Activated CD4-positive, alpha-beta memory T cell treated with anti-CD3 and anti-CD28 coated beads for 36 hours (primary cell): ENCODE measurements at regions of chr12 and their contacts with region 1.

Region 1: DNA sequence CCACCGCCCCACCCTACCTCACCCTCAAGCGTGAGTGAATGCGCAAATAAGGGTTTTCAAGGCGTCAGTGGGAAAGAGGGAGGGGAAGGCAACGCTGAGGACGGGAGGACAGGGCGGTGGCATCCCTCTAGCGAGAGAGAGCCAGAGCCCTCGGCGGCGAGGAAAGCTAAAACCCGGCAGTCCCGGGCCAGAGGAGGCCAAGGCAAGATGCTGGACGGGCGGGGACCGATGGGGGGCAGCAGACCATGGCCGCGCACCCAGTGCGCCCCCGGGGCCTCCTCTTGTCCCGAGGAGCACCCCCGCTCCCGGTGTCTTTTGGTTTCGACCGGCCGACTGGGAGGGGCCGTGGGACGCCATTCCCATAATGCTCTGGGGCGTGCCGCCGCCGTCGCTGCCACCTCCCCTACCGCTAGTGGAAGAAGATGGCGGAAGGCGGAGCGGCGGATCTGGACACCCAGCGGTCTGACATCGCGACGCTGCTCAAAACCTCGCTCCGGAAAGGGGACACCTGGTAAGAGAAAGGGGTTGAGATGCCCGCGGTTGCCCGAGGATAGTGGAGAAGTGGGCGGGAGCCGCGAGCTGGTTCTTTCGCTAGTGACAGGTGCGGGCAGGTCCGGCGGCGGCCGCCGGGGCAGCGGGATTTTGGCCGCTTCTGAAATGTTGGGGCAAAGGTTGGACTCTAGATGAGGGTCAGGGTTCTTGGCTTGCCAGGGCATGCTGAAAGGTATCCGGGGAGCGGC is at the start of gene USP15:
- DNase-seq: peak; percentile 97
- H3K4me3 Mint-ChIP-seq: peak within 1 kb of the TSS; percentile 94
- H3K27ac Mint-ChIP-seq: peak within 1 kb of the TSS; percentile 98
- H3K4me1 Mint-ChIP-seq: peaks cover 60% of the 10 kb centered on the region
- H3K27me3 Mint-ChIP-seq: no peaks in the 10 kb centered on the region
- total RNA-seq, gene USP15: 76.8 to 82.8 TPM

Region 2: GRCh38 chr12:62284749-62285148 is 24.6 kb after region 1 on chr12:
- CTCF ChIA-PET with region 1: interaction called, 4 read pairs
- POLR2A ChIA-PET with region 1: interaction called, 5 read pairs
- intact Hi-C with region 1: loop called (anchors 1 kb)
- DNase-seq: no peak
- H3K4me3 Mint-ChIP-seq: no peak overlapping the region
- H3K27ac Mint-ChIP-seq: no peak overlapping the region
- H3K4me1 Mint-ChIP-seq: peaks cover 83% of the 10 kb centered on the region
- H3K27me3 Mint-ChIP-seq: no peaks in the 10 kb centered on the region

Region 3: GRCh38 chr12:62306569-62307530 is 46.7 kb after region 1 on chr12:
- CTCF ChIA-PET with region 1: no interaction called
- POLR2A ChIA-PET with region 1: no interaction called
- intact Hi-C with region 1: no loop called
- DNase-seq: no peak
- H3K4me3 Mint-ChIP-seq: no peak overlapping the region
- H3K27ac Mint-ChIP-seq: peak overlapping the region; percentile 15
- H3K4me1 Mint-ChIP-seq: peaks cover 47% of the 10 kb centered on the region
- H3K27me3 Mint-ChIP-seq: no peaks in the 10 kb centered on the region

Region 4: DNA sequence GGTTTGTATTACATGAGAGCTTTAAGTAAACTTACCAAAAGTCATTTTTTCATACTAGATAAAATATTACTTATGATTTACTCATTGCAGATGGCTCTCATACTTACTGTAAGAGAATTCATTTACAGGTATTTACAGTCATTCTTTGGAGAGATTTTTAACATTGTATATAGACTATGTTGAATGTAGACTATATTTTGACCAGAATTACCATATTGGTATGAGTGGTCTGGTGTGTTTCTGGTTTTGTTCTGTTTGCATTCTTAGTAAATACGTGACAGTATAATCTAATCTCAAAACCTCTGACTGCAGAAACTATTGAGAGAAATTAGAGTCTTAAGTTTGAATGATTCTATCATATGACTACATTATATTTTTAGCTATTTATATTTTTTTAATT is 91.2 kb after region 1 on chr12:
- CTCF ChIA-PET with region 1: no interaction called
- POLR2A ChIA-PET with region 1: interaction called, 4 read pairs
- intact Hi-C with region 1: loop called (anchors 2 kb)
- DNase-seq: no peak
- H3K4me3 Mint-ChIP-seq: no peak overlapping the region
- H3K27ac Mint-ChIP-seq: no peak overlapping the region
- H3K4me1 Mint-ChIP-seq: peaks cover 9% of the 10 kb centered on the region
- H3K27me3 Mint-ChIP-seq: no peaks in the 10 kb centered on the region

Region 5: DNA sequence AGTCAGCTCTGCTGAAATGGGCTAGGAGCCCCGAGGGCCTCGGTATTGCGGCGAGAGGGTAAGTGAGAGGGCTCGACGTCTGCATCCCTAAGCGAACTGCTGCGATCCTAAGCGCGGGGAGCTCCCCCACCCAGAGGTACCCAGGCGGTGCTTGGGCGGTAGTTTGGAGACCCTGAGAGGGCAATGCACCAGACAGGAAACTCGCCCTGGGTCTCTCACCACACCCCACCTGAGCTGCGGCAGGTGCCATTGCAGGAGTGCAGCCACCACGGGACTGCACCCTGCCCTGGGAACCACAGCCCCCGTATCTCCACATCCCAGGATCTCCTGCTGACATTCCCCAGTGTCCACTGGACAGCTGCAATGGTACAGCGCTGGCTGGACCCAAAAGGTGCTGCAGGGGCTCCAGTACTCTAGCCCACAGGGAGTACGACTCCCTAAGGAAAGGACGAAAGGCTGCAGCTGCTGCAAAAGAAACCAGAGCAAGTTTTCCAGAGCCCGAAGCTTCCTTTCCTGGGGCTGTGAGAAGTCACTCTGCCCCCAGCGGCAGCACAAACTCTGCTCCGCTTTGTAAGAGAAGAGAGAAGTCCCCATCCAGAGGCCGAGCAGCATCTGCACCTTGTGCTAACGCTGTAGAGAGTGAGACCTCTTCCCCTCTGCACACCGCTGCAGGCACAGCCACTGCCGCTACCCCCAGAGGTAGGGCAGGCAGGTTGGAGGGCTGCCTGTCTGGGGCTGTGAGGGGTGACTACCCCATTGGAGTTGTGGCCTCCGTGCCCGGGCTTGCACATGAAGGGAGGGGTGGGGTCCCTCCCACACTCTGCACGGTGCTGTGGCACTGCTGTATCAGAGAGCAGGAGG is 175.4 kb after region 1 on chr12:
- CTCF ChIA-PET with region 1: interaction called, 4 read pairs
- POLR2A ChIA-PET with region 1: no interaction called
- intact Hi-C with region 1: loop called (anchors 5 kb)
- DNase-seq: peak; percentile 57
- H3K4me3 Mint-ChIP-seq: peak overlapping the region; percentile 72
- H3K27ac Mint-ChIP-seq: no peak overlapping the region
- H3K4me1 Mint-ChIP-seq: peaks cover 9% of the 10 kb centered on the region
- H3K27me3 Mint-ChIP-seq: peaks cover 15% of the 10 kb centered on the region

Region 6: DNA sequence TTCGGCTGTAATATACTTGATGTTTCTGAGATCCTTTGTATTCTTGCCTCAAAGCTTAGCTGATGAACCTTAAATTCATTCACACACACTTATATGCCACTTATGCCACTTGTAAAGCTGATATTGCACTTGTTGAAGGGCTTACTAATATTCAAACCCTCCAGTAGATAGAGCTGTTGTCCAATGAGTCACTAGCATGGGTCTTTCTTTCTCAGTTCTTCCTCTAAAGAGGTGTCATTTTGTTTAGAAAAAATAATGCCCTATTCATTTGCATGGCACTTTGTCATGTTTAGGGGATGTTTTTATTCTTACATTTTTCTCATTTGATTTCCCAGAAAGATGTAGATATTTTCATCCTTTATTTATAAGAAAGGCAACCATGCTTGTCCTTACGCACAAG is 262.8 kb after region 1 on chr12:
- CTCF ChIA-PET with region 1: no interaction called
- POLR2A ChIA-PET with region 1: no interaction called
- intact Hi-C with region 1: loop called (anchors 1 kb)
- DNase-seq: no peak
- H3K4me3 Mint-ChIP-seq: no peak overlapping the region
- H3K27ac Mint-ChIP-seq: no peak overlapping the region
- H3K4me1 Mint-ChIP-seq: peaks cover 31% of the 10 kb centered on the region
- H3K27me3 Mint-ChIP-seq: no peaks in the 10 kb centered on the region

Region 7: DNA sequence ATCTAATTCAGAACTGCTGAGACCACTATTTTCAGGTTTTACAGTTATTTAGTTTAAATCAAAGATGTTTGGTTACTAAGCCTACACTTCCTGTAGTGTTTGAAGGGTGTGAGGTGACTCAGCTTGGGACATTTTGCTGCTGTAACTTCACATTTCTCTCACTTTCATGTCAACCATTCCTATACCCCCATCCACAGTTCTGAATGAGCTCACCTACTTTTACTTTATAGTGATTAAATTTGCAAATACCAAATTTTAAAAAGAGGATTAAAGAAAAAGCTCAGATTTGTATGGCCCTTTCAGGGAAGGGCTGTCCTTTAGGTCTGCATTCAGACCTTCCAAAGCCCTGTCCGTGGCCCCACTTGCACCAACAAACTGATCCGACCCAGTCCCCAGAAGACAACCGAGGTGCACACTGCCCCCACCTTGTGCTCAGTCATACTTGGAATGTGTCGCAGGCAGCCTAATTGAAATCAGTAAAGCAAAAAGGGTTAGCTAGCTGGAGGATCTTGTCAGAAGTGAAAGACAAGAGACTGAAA is 380.8 kb after region 1 on chr12:
- CTCF ChIA-PET with region 1: no interaction called
- POLR2A ChIA-PET with region 1: no interaction called
- intact Hi-C with region 1: loop called (anchors 1 kb)
- DNase-seq: peak; percentile 69
- H3K4me3 Mint-ChIP-seq: peak overlapping the region; percentile 44
- H3K27ac Mint-ChIP-seq: peak overlapping the region; percentile 61
- H3K4me1 Mint-ChIP-seq: peaks cover 22% of the 10 kb centered on the region
- H3K27me3 Mint-ChIP-seq: peaks cover 6% of the 10 kb centered on the region

Region 8: GRCh38 chr12:62834971-62835547 is 574.9 kb after region 1 on chr12:
- CTCF ChIA-PET with region 1: no interaction called
- POLR2A ChIA-PET with region 1: no interaction called
- intact Hi-C with region 1: no loop called
- DNase-seq: no peak
- H3K4me3 Mint-ChIP-seq: no peak overlapping the region
- H3K27ac Mint-ChIP-seq: no peak overlapping the region
- H3K4me1 Mint-ChIP-seq: no peaks in the 10 kb centered on the region
- H3K27me3 Mint-ChIP-seq: peaks cover 2% of the 10 kb centered on the region

Region 9: DNA sequence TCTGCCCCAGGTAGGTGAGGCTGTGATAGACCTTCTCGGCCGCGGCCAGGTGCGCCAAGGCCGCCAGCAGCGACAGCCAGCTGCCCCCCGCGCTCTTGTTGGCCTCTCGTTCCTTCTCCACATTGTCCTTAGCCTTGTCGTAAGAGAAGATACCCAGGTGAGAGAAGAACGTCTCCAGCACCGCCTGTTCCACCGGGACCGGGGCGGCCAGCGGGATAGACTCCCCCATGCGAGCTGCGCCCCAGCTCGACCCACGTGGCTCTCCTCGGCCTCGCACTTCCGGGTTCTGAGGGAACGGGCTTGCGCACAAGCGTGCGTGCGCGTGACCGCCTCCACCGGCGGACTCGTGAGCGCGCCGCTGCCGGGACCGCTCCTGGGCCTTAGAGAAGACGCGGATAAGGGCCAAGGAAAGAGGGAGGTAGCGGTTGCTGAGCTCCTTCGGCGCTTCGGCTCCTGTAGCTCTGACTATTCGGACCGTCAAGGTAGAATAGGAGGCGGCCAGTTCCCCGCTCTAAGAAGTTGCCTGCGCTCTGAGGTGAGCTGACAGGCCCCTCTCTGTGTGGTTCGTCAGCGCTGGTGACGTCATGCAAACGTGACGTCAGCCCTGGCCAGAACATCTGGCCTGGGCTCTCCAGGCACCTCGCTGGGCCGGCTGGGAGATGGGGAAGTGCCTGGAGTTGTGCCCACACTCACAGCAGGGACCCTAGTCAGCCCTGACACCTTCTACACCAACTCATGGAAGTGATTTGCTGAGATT is 1962.0 kb after region 1 on chr12 and contains the start of gene KICS2:
- CTCF ChIA-PET with region 1: no interaction called
- POLR2A ChIA-PET with region 1: no interaction called
- intact Hi-C with region 1: loop called (anchors 5 kb)
- DNase-seq: peak; percentile 94
- H3K4me3 Mint-ChIP-seq: peak within 1 kb of the TSS; percentile 83
- H3K27ac Mint-ChIP-seq: peak within 1 kb of the TSS; percentile 84
- H3K4me1 Mint-ChIP-seq: peaks cover 20% of the 10 kb centered on the region
- H3K27me3 Mint-ChIP-seq: peaks cover 2% of the 10 kb centered on the region
- total RNA-seq, gene KICS2: 12.4 to 14.1 TPM